ENCODE measurements at regions of chr6 and their contacts with region 1.

Region 1: DNA sequence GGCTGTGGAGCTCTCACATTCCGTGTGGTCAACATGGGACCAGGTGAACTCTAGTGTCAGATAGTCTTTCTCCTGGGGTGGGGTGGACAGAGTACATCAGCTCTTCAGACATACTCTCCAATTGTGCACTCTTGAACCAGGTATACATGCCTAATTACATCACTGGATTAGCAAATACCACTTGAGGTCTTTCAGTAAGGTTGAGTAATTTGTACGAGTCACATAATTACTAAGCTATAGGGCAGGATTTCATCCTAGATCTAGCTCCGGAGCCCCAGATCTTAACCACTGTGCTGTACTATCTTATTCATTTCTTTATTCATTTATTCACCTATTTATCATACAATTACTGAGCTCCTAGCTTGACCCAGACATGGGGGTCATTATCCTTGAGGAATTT is 821.3 kb downstream of the TFAP2A start:
- DNase-seq: no peak

Region 2: DNA sequence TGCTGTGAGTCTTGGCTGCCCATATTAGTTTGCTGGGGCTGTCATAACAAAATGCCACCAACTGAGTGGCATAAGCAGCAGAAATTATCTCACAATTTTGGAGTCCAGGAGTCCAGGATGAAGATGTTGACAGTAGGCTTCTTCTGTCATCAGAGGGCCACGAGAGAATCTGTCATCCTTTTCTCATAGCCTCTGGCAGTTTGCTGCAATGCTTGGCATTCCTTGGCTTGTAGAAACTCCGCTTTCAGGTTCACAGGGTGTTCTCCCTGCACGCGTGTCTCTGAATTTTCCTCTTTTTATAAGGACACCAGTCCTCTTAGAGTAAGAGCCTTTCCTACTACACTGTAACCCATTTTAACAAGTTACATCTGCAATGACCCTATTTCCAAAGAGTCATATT is 17.0 kb before region 1 on chr6:
- intact Hi-C with region 1: loop called in 1 of 2 experiments (anchors 1 kb)
- DNase-seq: no peak

Region 3: GRCh38 chr6:9732056-9732455 is 138.5 kb after region 1 on chr6:
- intact Hi-C with region 1: no loop called
- DNase-seq: no peak